Activated CD8-positive, alpha-beta memory T cell treated with anti-CD3 and anti-CD28 coated beads, Interleukin-2, amount 10 ng/mL, durations not matched to agents 7 days and 5 days (primary cell): ENCODE measurements at regions of chr14 and their contacts with region 1.

Region 1: DNA sequence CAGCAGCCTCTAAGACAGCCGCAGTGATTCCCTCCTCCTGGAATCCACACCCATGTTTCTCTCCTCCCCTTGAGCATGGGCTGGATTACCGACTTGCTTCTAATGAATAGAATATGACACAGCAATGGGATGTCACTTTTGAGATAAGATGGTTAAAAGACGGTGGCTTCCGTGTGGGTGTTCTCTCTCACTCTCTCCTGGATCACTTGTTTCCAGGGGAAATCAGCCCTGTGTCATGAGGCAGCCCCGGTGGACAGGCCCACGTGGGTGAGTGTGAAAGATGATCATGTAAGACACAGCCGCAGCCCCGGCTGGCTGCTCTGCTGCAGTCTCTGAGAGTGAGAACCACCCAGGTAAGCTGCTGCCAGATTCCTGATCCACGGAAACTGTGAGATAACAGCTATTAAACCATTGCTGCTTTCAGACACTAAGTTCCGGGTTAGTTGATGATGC is 10.7 kb downstream of the MOAP1 start:
- DNase-seq: no peak
- ATAC-seq: no peak
- H3K4me3 Mint-ChIP-seq: no peak overlapping the region
- H3K27ac Mint-ChIP-seq: no peak overlapping the region
- H3K4me1 Mint-ChIP-seq: peaks cover 7% of the 10 kb centered on the region
- H3K27me3 Mint-ChIP-seq: no peaks in the 10 kb centered on the region

Region 2: DNA sequence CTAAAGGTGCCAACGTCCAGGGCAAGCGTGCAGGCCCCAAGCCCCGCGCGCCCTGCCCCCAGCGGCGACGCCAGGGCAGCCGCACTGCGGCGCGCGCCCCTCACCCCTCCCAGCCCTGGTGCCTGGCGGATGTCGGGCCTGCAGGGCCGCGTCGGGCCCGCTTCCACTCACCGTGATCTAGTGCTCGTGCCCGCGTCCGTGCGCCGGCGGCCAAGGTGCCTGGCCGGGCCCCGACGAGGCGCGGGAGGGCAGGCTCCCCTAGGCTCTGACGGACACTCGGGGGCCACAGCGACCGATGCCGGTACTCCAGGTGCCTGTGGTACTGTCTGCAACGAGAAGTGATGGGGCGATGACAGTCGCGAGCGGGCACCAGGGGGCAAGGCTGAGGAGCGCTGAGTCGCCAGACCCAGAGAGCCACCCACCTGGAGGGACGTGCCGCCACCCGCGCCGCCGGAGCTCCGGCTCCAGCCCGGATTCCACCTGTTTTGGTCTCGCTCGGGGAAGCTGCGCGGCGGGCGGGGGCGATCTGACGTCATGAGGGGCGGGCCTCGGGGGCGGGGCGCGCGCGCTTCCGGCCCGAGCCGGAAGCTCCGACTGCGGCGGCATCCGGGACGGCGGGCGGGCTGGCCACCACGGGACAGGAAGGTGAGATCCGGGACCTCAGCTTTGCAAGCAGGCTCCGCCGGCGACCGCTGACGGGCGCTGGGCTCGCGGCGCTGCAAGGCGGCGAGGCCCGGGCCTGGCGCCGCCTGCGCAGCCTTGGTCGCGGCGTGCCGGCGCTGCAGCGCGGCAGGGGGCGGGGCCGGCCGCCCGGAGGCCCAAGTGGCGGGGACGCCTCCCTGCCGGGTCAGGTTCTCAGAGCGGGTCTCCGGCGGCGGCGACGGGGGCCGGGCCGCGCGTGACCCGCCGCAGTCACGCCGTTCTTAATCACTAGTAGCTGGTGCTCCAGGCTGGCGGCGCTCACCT is 10.7 kb after region 1 on chr14 and contains the starts of genes LYSET and MOAP1:
- CTCF ChIA-PET with region 1: interaction called, 10 read pairs
- DNase-seq: peak; percentile 95
- ATAC-seq: peak; percentile 90
- H3K4me3 Mint-ChIP-seq: peak within 1 kb of the TSS; percentile 90
- H3K27ac Mint-ChIP-seq: peak within 1 kb of the TSS; percentile 94
- H3K4me1 Mint-ChIP-seq: peaks cover 31% of the 10 kb centered on the region
- H3K27me3 Mint-ChIP-seq: no peaks in the 10 kb centered on the region
- total RNA-seq, gene LYSET: 6.3 to 9.7 TPM
- total RNA-seq, gene MOAP1: 18.2 to 19.5 TPM